ENCODE measurements at regions of chr2 and their contacts with region 1.

Region 1: GRCh38 chr2:165874445-165875039 is 79.0 kb downstream of the TTC21B start:
- DNase-seq: peak; percentile 26
- H3K4me3 ChIP-seq: no peak overlapping the region
- H3K27ac ChIP-seq: no peak overlapping the region
- H3K4me1 ChIP-seq: no peaks in the 10 kb centered on the region
- H3K27me3 ChIP-seq: no peaks in the 10 kb centered on the region
- CTCF ChIP-seq: peak; percentile 61

Region 2: GRCh38 chr2:165778653-165779451 is 95.7 kb before region 1 on chr2:
- intact Hi-C with region 1: loop called (anchors 10 kb)
- DNase-seq: no peak
- H3K4me3 ChIP-seq: no peak overlapping the region
- H3K27ac ChIP-seq: no peak overlapping the region
- H3K4me1 ChIP-seq: peaks cover 8% of the 10 kb centered on the region
- H3K27me3 ChIP-seq: no peaks in the 10 kb centered on the region
- CTCF ChIP-seq: peak; percentile 30

Measured in colonic mucosa (tissue), 4 donors.